ENCODE measurements at regions of chr6 and their contacts with region 1.

Region 1: DNA sequence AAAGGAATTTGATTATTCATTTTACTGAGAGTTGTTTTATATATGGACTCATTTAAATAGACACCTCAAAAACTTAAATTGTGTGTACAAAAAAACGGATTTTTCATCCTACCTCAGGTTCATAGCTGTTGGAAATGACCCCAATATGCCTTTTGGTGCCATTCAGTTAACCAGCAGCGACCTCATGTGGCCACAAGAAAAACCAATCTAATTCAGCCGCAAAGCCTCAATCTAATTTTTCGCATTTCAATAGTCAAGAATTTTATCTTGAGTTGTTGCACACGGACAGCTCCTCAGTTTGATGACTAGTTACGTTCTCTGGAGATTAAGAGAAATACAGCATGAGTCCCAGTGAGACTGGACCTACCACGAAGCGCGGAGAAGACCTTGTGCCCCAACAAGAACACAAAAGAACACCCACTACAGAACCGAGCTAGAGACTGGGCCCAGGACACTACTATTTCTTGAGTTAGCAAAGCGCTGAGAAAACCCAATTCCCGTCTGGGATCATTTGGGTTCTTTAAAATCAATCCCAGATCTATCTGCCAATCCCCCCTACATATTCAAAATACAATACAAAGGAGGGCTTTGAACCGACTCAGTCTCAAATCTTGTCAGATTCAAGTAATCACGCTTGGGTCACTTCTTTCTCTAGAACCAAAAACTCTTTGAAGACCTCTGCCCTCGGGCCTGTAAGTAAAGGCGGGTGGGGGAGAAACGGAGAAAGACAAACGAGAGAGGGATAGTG is 1.1 kb downstream of the TCP11 start:
- DNase-seq: peak; percentile 49
- CTCF ChIP-seq: peak; percentile 79

Region 2: GRCh38 chr6:34459899-34460593 is 680.0 kb before region 1 on chr6:
- CTCF ChIA-PET with region 1: interaction called, 26 read pairs
- POLR2A ChIA-PET with region 1: no interaction called
- DNase-seq: peak; percentile 76
- CTCF ChIP-seq: peak; percentile 75

Region 3: DNA sequence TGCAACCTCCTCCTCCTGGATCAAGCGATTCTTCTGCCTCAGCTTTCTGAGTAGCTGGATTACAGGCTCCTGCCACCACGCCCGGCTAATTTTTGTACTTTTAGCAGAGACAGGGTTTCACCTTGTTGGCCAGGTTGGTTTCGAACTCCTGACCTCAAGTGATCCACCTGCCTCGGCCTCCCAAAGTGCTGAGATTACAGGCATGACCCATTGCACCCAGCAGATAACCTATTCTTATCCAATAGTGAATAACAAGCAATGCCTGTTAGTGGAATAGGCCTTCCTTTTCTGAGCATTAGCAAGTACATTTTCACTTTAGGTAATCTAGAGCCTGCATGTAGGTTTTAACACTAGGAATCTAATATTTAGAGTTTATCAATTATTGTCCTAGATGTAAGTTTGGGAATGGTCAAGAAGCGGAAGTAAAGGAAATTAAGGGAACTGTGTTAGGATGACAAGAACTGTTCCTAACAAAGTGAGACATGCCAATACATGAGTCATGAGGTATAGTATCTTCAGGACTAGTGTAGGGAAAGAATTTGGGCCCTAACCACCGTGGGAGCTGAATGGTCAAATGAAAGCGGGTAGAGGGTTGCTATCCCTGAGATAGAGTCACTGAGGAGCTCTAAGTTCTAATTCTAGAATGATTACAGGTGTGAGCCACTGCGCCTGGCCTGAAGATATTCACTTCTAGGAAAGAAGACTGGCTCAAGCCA is 333.2 kb before region 1 on chr6:
- CTCF ChIA-PET with region 1: no interaction called
- POLR2A ChIA-PET with region 1: no interaction called
- DNase-seq: no peak
- CTCF ChIP-seq: no peak

Region 4: DNA sequence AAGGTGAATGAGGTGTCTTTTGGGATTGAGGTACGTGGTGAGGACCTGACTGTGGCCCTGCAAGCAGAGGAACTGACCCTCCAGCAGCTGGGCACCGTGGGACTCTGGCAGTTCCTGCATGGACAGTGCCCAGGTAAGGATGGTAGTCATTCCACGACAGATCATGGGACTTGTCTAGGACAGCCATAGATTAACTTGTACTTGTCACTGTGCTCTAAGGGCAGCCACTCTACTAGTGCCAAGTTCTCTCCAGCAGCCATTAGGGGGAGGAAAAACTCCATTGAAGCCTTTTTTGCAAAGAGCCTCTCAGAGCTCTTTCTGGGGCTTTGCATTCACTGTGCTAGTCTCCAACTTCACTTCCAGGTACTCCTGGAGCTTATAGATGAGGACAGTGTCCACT is 272.6 kb before region 1 on chr6:
- CTCF ChIA-PET with region 1: no interaction called
- POLR2A ChIA-PET with region 1: no interaction called
- DNase-seq: no peak
- CTCF ChIP-seq: peak; percentile 5

Region 5: GRCh38 chr6:35011096-35012041 is 128.7 kb before region 1 on chr6:
- CTCF ChIA-PET with region 1: interaction called, 16 read pairs
- POLR2A ChIA-PET with region 1: no interaction called
- DNase-seq: peak; percentile 58
- CTCF ChIP-seq: peak; percentile 1

Region 6: DNA sequence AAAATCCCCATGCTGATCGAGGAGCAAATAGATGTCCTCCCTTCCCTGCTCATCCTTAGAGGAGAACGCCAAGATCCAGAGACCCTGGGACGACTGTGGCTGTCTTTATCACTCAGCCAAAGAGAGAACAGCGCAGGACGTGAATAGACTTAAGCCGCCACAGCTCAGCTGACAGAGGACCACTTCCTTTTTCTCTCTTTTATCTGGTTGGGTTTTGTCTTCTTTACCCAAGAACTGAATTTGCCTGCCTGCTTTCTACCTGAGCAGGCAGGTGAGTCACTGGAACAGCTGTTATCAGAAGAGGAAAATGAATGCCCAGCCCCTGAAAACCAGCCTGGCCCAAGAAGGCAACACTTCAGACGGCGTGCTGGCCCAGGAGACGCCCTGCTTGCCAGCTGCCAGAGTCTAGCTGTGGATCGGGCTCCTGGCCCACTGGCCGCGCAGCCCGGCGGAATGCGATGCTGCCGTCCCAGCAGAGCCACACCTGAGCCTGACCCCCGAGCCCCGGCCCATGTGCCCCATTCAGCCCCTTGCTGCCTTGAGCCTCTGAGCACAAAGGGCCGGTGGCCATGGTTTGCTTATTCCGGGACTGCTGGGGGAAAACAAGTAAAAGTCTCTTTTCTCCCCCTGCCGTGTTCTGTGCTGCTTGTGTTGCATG is 81.1 kb before region 1 on chr6:
- CTCF ChIA-PET with region 1: no interaction called
- POLR2A ChIA-PET with region 1: no interaction called
- DNase-seq: no peak
- CTCF ChIP-seq: no peak

Region 7: GRCh38 chr6:35165630-35166071 is 25.6 kb after region 1 on chr6:
- CTCF ChIA-PET with region 1: interaction called, 10 read pairs
- POLR2A ChIA-PET with region 1: no interaction called
- DNase-seq: peak; percentile 36
- CTCF ChIP-seq: no peak

Region 8: DNA sequence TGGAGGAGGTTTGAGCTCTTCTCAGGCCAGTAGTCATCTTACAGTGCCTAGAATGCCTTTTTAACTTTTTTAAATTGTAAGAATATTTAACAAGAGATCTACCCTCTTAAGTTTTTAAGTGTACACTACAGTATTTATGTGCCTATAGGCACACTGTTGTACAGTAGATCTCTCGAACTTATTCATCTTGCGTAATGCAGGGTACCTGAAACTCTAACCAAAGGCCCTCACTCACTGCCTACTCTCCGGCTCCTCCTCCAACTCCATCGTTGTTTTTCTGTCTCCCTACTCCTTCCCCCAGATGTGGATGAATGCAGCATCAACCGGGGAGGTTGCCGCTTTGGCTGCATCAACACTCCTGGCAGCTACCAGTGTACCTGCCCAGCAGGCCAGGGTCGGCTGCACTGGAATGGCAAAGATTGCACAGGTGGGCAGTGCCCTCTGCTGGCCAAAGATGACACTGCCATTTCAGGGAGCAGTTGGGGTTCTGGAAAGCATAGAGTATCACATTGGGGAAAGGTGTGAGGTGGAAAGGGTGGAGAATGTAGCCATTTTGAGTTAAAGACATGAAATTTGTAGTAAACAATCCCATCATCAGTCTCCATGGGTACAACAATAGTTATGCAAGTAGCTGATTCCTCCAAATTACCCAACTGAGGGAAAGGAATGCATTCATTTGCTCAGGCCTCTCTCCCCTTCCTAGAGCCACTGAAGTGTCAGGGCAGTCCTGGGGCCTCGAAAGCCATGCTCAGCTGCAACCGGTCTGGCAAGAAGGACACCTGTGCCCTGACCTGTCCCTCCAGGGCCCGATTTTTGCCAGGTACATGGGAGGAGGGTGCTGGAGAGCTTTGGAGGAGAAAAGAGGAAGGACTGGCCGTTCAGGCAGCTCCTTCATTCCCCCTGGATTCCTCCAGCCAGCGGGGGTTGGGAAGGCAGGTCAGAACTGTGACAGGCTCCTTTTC is 101.0 kb after region 1 on chr6:
- CTCF ChIA-PET with region 1: interaction called, 24 read pairs
- POLR2A ChIA-PET with region 1: no interaction called
- DNase-seq: peak; percentile 86
- CTCF ChIP-seq: peak; percentile 99